Right ventricle myocardium superior (tissue), 1 donor: ENCODE measurements at regions of chr3 and their contacts with region 1.

Region 1: DNA sequence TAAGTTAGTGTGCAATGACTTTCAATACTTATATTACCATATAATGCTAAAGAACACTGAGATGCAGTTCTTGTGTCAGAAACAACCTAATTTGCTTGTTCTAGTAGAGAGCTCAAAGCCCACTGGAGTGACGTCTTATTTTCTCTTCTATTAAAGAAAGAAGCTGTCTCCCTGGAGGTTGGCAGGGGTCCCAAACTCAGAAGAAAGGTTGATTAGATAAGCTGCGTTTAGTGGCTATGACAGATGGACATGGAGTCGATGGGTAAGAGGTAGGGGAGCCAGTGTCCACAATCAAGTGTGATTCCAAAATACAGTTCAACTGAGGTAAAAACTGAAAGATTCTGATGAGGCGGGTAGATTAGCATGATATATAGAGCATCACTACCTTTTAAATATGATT is 363.6 kb downstream of the NLGN1 start:
- DNase-seq: no peak
- ATAC-seq: no peak

Region 2: GRCh38 chr3:174710612-174711011 is 949.5 kb after region 1 on chr3:
- intact Hi-C with region 1: loop called (anchors 10 kb)
- DNase-seq: no peak
- ATAC-seq: no peak